ENCODE measurements at regions of chr15 and their contacts with region 1.

Region 1: GRCh38 chr15:84818261-84819131 is 1.3 kb downstream of the ALPK3 start:
- DNase-seq: peak in 2 of 3 donors; percentile 67 to 72
- ATAC-seq: peak; percentile 18 to 60
- H3K4me3 ChIP-seq: peak overlapping the region; percentile 67
- H3K27ac ChIP-seq: peak overlapping the region; percentile 95
- H3K4me1 ChIP-seq: peaks cover 38% of the 10 kb centered on the region
- H3K27me3 ChIP-seq: no peaks in the 10 kb centered on the region

Region 2: GRCh38 chr15:84748274-84749110 is 70.0 kb before region 1 on chr15 and contains the start of gene ZNF592:
- intact Hi-C with region 1: loop called in 2 of 4 experiments (anchors 10 kb)
- DNase-seq: peak; percentile 89 to 96 (median 94)
- ATAC-seq: peak; percentile 78 to 84
- H3K4me3 ChIP-seq: peak within 1 kb of the TSS; percentile 98
- H3K27ac ChIP-seq: peak within 1 kb of the TSS; percentile 96
- H3K4me1 ChIP-seq: peaks cover 5% of the 10 kb centered on the region
- H3K27me3 ChIP-seq: no peaks in the 10 kb centered on the region
- total RNA-seq, gene ZNF592: 20.3 to 25.6 (median 20.6) TPM